ENCODE measurements at regions of chr7 and their contacts with region 1.

Region 1: GRCh38 chr7:155234158-155234492 is 63.6 kb upstream of the INSIG1 start:
- DNase-seq: no peak
- H3K4me3 ChIP-seq: no peak overlapping the region
- H3K4me3 Mint-ChIP-seq: no peak overlapping the region
- H3K27ac Mint-ChIP-seq: peak overlapping the region; percentile 87
- H3K4me1 ChIP-seq: peaks cover 62% of the 10 kb centered on the region
- H3K4me1 Mint-ChIP-seq: peaks cover 40% of the 10 kb centered on the region
- H3K27me3 ChIP-seq: no peaks in the 10 kb centered on the region
- H3K27me3 Mint-ChIP-seq: no peaks in the 10 kb centered on the region
- CTCF ChIP-seq: no peak

Region 2: DNA sequence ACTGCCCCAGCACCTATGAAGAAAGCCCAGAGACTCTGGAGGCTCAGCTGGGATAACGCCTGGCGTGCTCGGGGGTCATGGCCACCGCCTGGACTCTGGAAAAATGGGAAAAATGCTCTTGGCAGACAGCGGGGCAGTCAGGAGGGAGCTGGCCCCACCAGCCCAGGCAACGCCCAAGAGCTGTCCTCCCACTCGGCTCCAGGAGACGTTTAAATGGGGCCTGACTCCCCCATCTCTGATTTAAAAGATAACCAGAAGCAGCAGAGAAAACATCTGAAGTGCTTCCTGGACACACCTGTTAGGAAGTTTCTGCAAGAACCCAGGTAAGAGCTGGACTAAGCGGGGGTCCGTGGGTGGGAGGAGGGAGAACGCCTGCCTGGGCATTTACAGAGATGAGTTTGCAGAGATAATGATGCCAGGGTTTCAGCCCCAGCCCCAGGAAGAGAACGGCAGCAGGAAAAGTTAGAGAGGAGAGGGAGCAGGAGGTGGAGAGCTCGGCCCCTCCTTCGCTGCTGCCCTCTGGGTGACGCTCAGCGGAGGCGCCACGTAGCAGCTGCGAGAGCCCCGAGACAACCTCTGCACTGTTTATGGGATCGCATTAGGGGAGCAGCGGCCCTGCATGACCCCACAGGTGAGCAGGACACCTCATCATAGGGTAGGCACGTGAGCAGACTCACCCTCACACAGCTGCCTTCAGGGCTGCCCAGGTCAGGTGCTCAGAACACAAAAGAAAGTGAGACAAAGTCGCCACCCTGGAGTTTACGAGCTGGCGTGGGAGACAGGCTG is 20.0 kb before region 1 on chr7:
- CTCF ChIA-PET with region 1: interaction called, 3 read pairs
- POLR2A ChIA-PET with region 1: interaction called, 3 read pairs
- intact Hi-C with region 1: loop called (anchors 2 kb)
- DNase-seq: peak; percentile 47 to 71
- H3K4me3 ChIP-seq: peak overlapping the region; percentile 33
- H3K4me3 Mint-ChIP-seq: peak overlapping the region; percentile 85
- H3K27ac Mint-ChIP-seq: peak overlapping the region; percentile 83
- H3K4me1 ChIP-seq: peaks cover 17% of the 10 kb centered on the region
- H3K4me1 Mint-ChIP-seq: peaks cover 11% of the 10 kb centered on the region
- H3K27me3 ChIP-seq: no peaks in the 10 kb centered on the region
- H3K27me3 Mint-ChIP-seq: no peaks in the 10 kb centered on the region
- CTCF ChIP-seq: no peak

Measured in Caco-2 (cell line).